Naive thymus-derived CD8-positive, alpha-beta T cell (primary cell): ENCODE measurements at regions of chr16 and their contacts with region 1.

Region 1: DNA sequence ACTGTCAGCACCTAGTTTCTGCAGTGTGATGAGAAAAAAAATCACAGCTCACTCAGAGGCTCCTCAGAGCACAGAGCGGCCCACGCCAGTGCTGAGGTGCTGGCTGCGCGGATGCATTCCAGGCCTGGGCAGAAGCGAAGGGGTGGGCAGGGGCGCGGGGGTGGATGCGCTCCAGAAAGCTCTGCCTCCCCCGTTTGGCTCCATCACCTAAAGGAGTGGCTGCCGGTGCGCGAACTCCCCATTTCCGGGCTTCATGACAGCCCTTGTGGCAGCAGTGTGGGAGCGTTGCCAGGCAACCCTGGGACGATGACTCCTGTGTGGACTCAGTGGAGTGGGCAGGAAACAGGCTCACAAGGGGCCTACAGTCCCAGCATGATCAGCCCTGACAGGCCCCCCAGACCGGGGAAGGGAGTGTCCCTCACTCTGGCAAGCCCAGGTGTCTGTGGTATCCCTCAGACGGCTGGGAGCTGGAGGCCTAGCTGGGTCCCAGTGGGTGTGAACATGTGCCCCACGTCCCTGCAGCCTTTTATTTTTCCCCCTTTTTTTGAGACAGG is 32.8 kb upstream of the NUDT16L1 start:
- DNase-seq: peak in 9 of 10 donors; percentile 57 to 86 (median 76)
- ATAC-seq: peak; percentile 49 to 67
- H3K4me3 Mint-ChIP-seq: peak overlapping the region; percentile 36 to 73 (median 59)
- H3K27ac Mint-ChIP-seq: peak overlapping the region; percentile 79 to 98 (median 94)
- H3K4me1 Mint-ChIP-seq: peaks cover 21 to 77% (median 63%) of the 10 kb centered on the region in 4 donors
- H3K27me3 Mint-ChIP-seq: no peaks in the 10 kb centered on the region

Region 2: DNA sequence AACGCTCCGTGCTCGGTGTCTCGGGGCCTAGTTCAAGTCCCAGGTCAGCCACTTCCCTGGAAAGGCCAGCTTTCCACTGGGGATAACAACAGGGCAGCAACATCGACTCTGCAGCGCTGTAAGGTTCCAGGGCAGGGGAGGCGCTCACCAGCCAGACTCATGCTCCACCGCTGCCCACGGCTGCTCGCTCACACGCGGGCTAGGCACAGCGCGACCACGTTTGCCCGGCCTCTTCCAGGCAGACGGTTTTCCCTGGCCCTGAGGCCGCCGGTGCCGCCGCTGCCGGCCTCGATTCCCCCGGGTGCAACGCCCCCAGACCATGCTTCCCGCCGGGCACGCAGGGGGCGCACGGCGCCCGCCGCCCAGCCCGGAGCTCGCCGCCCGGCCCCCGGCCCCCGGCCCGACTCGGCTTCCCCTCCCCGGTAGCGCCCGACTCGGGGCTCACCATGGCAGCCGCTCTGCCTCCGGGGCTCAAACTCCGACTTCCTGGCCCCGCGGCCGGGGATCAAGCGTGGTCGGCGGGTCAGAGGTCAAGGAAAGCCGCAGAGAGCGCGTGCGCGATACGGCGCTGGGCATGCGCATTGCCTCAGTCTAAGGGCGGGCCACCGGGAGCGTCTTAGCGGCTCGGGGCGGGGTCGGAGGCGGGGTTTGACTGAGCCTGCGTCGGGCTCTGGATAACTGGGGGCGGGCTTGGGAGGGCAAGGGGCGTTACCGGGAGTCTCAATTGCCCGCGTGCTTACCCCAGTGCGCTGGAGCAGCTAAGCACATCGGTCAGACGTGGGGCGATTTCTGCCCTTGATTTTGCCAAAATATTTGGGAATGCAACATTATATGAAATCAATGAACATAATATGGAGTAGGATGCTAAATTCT is 309.5 kb before region 1 on chr16 and contains the start of gene PAM16:
- POLR2A ChIA-PET with region 1: no interaction called
- DNase-seq: peak; percentile 94 to 99 (median 98)
- ATAC-seq: peak; percentile 88 to 90
- H3K4me3 Mint-ChIP-seq: peak within 1 kb of the TSS; percentile 87 to 96 (median 94)
- H3K27ac Mint-ChIP-seq: peak within 1 kb of the TSS; percentile 81 to 96 (median 94)
- H3K4me1 Mint-ChIP-seq: peaks cover 10 to 46% (median 29%) of the 10 kb centered on the region in 4 donors
- H3K27me3 Mint-ChIP-seq: peaks cover 0 to 1% (median 0%) of the 10 kb centered on the region in 5 donors
- polyA plus RNA-seq, gene PAM16: 33.6 to 44.4 (median 39.3) TPM

Region 3: GRCh38 chr16:4616047-4616811 is 44.3 kb before region 1 on chr16:
- POLR2A ChIA-PET with region 1: interaction called, 14 read pairs
- DNase-seq: peak; percentile 92 to 100 (median 99)
- ATAC-seq: peak; percentile 87 to 92
- H3K4me3 Mint-ChIP-seq: peak overlapping the region; percentile 92 to 99 (median 95)
- H3K27ac Mint-ChIP-seq: peak overlapping the region; percentile 95 to 100 (median 100)
- H3K4me1 Mint-ChIP-seq: peaks cover 11 to 48% (median 39%) of the 10 kb centered on the region in 4 donors
- H3K27me3 Mint-ChIP-seq: no peaks in the 10 kb centered on the region

Region 4: DNA sequence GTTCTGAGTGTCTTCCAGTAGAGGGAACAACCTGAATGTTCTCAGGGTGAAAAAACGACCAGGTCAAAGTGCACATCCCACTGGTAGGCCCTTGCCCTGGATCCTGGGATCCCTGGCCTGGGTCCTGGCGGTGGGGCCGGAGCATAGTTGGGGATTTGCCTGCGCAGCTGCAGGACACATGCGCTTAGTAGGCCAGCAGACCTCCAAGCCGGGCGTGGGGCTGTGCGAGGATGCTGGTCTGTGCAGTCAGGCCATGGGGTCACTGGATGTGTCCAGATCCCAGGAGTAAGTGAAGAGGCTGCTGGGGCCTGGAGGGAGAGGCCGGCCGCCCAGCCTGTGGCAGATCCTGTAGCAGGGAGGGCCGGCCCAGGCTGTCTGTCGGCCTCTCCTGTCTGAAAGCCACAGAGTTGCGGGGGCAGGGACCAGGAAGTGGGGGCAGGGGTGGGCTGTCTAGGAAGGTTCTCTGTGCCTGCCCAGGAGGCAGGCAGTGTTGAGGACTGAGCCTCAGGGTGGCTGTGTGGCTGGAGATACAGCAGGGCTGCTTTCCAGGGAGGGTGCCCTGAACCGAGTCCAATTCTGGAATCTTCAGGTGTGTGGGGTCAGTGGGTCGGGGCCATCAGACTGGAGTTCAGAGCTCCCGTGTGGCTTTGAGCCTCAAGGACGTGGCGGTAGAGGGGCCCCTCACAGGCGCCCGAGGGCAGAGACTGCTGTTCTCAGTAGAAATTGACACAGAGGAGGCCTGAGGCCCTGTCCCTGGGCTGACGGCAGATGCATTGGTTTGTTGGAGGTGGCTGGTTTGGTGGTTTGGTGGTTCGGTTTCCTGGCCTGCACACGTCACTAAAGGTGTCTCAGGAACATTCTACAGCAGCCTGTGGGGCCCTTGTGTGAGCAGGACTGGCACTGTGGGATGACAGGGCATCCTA is 15.6 kb after region 1 on chr16:
- POLR2A ChIA-PET with region 1: interaction called, 11 read pairs
- DNase-seq: peak; percentile 37 to 81 (median 71)
- ATAC-seq: peak; percentile 83 to 92
- H3K4me3 Mint-ChIP-seq: peak overlapping the region; percentile 61 to 86 (median 81)
- H3K27ac Mint-ChIP-seq: peak overlapping the region; percentile 96 to 99 (median 98)
- H3K4me1 Mint-ChIP-seq: peaks cover 15 to 50% (median 39%) of the 10 kb centered on the region in 4 donors
- H3K27me3 Mint-ChIP-seq: no peaks in the 10 kb centered on the region

Region 5: GRCh38 chr16:4682616-4683254 is 22.2 kb after region 1 on chr16:
- POLR2A ChIA-PET with region 1: interaction called, 11 read pairs
- DNase-seq: peak in 7 of 10 donors; percentile 40 to 73 (median 46)
- ATAC-seq: peak; percentile 38 to 40
- H3K4me3 Mint-ChIP-seq: peak overlapping the region in 2 of 10 donors; percentile 31 to 61
- H3K27ac Mint-ChIP-seq: peak overlapping the region in 4 of 10 donors; percentile 20 to 95 (median 56)
- H3K4me1 Mint-ChIP-seq: peaks cover 11 to 41% (median 26%) of the 10 kb centered on the region in 4 donors
- H3K27me3 Mint-ChIP-seq: no peaks in the 10 kb centered on the region